ENCODE measurements at regions of chr1 and their contacts with region 1.

Region 1: GRCh38 chr1:157369808-157370521 is 182.3 kb downstream of the FCRL5 start:
- DNase-seq: peak in 1 of 2 experiments; percentile 69
- H3K4me3 ChIP-seq: no peak overlapping the region
- H3K27ac ChIP-seq: no peak overlapping the region
- H3K4me1 ChIP-seq: no peaks in the 10 kb centered on the region; a peak in 1 of 7 replicates
- H3K27me3 ChIP-seq: no peaks in the 10 kb centered on the region
- CTCF ChIP-seq: peak; percentile 24 to 84 (median 77)
- EP300 ChIP-seq: no peak
- POLR2A ChIP-seq: no peak
- RAD21 ChIP-seq: peak; percentile 82 to 84

Region 2: DNA sequence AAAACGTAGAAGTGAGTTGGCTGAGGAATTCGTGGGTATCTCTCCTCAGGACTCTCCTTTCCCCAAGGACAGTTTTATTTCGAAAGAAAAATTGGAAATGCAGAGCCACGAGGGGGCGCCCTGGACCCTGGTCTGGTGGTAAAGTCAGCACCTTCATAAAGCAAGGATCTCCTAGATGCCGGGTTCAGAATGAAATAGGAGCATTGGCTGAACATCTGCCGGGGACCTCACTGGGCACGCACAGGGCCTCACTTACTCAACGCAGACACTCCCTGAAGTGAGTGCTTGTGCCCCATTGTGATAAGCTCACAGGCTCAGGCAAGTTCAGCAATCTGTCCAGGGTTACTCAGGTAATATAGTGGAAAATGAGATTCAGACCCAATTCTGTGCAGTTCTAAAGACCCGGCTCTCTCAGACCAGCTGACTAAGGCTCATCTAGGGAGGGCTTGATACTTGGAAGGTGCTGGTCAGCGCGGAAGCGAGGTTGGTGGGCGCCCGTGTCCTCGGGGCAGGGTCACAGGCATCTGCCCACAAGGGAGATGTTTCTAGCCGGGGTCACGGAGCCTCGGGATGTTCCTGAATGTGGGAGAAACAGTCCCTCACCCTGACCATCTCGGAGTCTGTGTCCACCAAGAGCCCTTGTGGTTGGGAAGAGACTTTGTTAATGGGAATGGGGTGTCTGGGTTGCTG is 176.1 kb before region 1 on chr1:
- CTCF ChIA-PET with region 1: interaction called, 28 read pairs
- POLR2A ChIA-PET with region 1: no interaction called
- DNase-seq: peak; percentile 53 to 95
- H3K4me3 ChIP-seq: no peak overlapping the region
- H3K27ac ChIP-seq: no peak overlapping the region
- H3K4me1 ChIP-seq: peaks cover 0 to 2% (median under 1%) of the 10 kb centered on the region in 4 experiments; a peak in 1 of 7 replicates
- H3K27me3 ChIP-seq: no peaks in the 10 kb centered on the region; a peak in 2 of 7 replicates
- CTCF ChIP-seq: peak; percentile 67 to 84 (median 80)
- EP300 ChIP-seq: no peak
- POLR2A ChIP-seq: no peak
- RAD21 ChIP-seq: peak; percentile 80 to 81

Region 3: DNA sequence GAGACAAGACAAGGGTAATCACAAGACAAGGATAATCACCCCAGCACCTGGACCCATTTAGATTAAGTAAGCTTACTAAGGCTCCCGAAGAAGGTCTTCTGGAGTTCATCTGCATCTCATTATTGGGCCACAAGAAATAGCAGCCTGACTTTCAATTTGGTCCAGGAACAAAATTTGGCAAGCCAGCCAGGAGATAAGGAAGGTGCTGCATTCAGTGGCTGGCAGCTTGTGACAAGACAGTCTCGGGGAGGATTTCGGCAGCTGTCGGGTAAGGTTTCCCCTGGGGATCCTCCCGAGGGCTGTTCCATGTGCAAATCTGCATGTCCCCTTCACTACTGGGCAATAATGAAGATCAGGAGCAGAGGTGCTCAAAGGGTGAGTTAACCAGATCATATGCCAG is 12.9 kb before region 1 on chr1:
- CTCF ChIA-PET with region 1: interaction called, 27 read pairs
- POLR2A ChIA-PET with region 1: no interaction called
- DNase-seq: no peak
- H3K4me3 ChIP-seq: no peak overlapping the region
- H3K27ac ChIP-seq: no peak overlapping the region
- H3K4me1 ChIP-seq: 0 out of 7 replicates have a peak, but pooled peaks cover 0 to 4% (median 0%) of the 10 kb centered on the region in 4 experiments
- H3K27me3 ChIP-seq: no peaks in the 10 kb centered on the region; a peak in 1 of 7 replicates
- CTCF ChIP-seq: no peak
- EP300 ChIP-seq: no peak
- POLR2A ChIP-seq: no peak
- RAD21 ChIP-seq: no peak

Region 4: GRCh38 chr1:157482174-157482573 is 112.2 kb after region 1 on chr1:
- CTCF ChIA-PET with region 1: interaction called, 18 read pairs
- POLR2A ChIA-PET with region 1: no interaction called
- DNase-seq: no peak
- H3K4me3 ChIP-seq: no peak overlapping the region
- H3K27ac ChIP-seq: no peak overlapping the region
- H3K4me1 ChIP-seq: 0 out of 7 replicates have a peak, but pooled peaks cover 0 to 3% (median 0%) of the 10 kb centered on the region in 4 experiments
- H3K27me3 ChIP-seq: no peaks in the 10 kb centered on the region
- CTCF ChIP-seq: no peak
- EP300 ChIP-seq: no peak
- POLR2A ChIP-seq: no peak
- RAD21 ChIP-seq: no peak

Region 5: DNA sequence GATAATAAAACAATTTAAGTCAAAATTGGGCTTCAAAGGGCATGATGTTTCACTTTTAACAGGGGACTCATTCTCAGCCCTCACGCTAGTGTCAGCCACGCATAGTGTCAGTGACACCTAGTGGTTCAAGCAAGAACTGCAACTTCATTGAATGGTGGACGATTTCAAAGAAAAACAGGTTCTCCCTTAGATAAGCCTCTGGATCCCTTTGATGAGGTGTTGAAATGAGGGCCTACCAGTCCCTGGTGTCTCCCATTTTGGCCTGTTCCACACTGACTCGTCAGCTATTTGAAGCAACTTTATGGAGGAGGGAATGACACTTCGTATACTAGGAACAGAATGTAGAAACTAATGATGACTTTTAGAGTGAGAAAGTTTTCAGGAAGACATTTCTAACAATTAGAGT is 126.2 kb after region 1 on chr1:
- CTCF ChIA-PET with region 1: interaction called, 16 read pairs
- POLR2A ChIA-PET with region 1: no interaction called
- DNase-seq: peak in 1 of 2 experiments; percentile 71
- H3K4me3 ChIP-seq: no peak overlapping the region
- H3K27ac ChIP-seq: no peak overlapping the region
- H3K4me1 ChIP-seq: no peaks in the 10 kb centered on the region; a peak in 1 of 7 replicates
- H3K27me3 ChIP-seq: no peaks in the 10 kb centered on the region
- CTCF ChIP-seq: peak; percentile 26 to 87 (median 71)
- EP300 ChIP-seq: no peak
- POLR2A ChIP-seq: no peak
- RAD21 ChIP-seq: peak; percentile 72 to 79